CD8-positive, alpha-beta T cell (primary cell): ENCODE measurements at regions of chr1 and their contacts with region 1.

Region 1: GRCh38 chr1:8848663-8849386 is 29.7 kb downstream of the ENO1 start:
- DNase-seq: peak; percentile 51 to 86 (median 76)
- ATAC-seq: peak; percentile 92
- H3K4me3 ChIP-seq: no peak overlapping the region
- H3K4me3 Mint-ChIP-seq: no peak overlapping the region
- H3K27ac ChIP-seq: no peak overlapping the region
- H3K27ac Mint-ChIP-seq: no peak overlapping the region
- H3K4me1 ChIP-seq: peaks cover 3% of the 10 kb centered on the region
- H3K4me1 Mint-ChIP-seq: peaks cover 2% of the 10 kb centered on the region
- H3K27me3 ChIP-seq: no peaks in the 10 kb centered on the region
- H3K27me3 Mint-ChIP-seq: peaks cover 2% of the 10 kb centered on the region
- CTCF ChIP-seq: peak; percentile 82

Region 2: GRCh38 chr1:7993593-7994479 is 855.0 kb before region 1 on chr1:
- CTCF ChIA-PET with region 1: no interaction called
- POLR2A ChIA-PET with region 1: no interaction called
- intact Hi-C with region 1: loop called in 1 of 2 experiments (anchors 10 kb)
- DNase-seq: no peak
- ATAC-seq: no peak
- H3K4me3 ChIP-seq: no peak overlapping the region
- H3K4me3 Mint-ChIP-seq: no peak overlapping the region
- H3K27ac ChIP-seq: no peak overlapping the region
- H3K27ac Mint-ChIP-seq: no peak overlapping the region
- H3K4me1 ChIP-seq: no peaks in the 10 kb centered on the region
- H3K4me1 Mint-ChIP-seq: no peaks in the 10 kb centered on the region
- H3K27me3 ChIP-seq: no peaks in the 10 kb centered on the region
- H3K27me3 Mint-ChIP-seq: no peaks in the 10 kb centered on the region
- CTCF ChIP-seq: no peak

Region 3: GRCh38 chr1:8554956-8555534 is 293.8 kb before region 1 on chr1:
- CTCF ChIA-PET with region 1: interaction called, 21 read pairs
- POLR2A ChIA-PET with region 1: interaction called, 3 read pairs
- intact Hi-C with region 1: no loop called
- DNase-seq: no peak
- ATAC-seq: no peak
- H3K4me3 ChIP-seq: no peak overlapping the region
- H3K4me3 Mint-ChIP-seq: no peak overlapping the region
- H3K27ac ChIP-seq: no peak overlapping the region
- H3K27ac Mint-ChIP-seq: no peak overlapping the region
- H3K4me1 ChIP-seq: peaks cover 16% of the 10 kb centered on the region
- H3K4me1 Mint-ChIP-seq: peaks cover 22% of the 10 kb centered on the region
- H3K27me3 ChIP-seq: no peaks in the 10 kb centered on the region
- H3K27me3 Mint-ChIP-seq: no peaks in the 10 kb centered on the region
- CTCF ChIP-seq: no peak

Region 4: GRCh38 chr1:8571200-8571984 is 277.4 kb before region 1 on chr1:
- CTCF ChIA-PET with region 1: interaction called, 114 read pairs
- POLR2A ChIA-PET with region 1: no interaction called
- intact Hi-C with region 1: no loop called
- DNase-seq: no peak
- ATAC-seq: no peak
- H3K4me3 ChIP-seq: no peak overlapping the region
- H3K4me3 Mint-ChIP-seq: no peak overlapping the region
- H3K27ac ChIP-seq: no peak overlapping the region
- H3K27ac Mint-ChIP-seq: no peak overlapping the region
- H3K4me1 ChIP-seq: no peaks in the 10 kb centered on the region
- H3K4me1 Mint-ChIP-seq: peaks cover 7% of the 10 kb centered on the region
- H3K27me3 ChIP-seq: no peaks in the 10 kb centered on the region
- H3K27me3 Mint-ChIP-seq: no peaks in the 10 kb centered on the region
- CTCF ChIP-seq: no peak

Region 5: DNA sequence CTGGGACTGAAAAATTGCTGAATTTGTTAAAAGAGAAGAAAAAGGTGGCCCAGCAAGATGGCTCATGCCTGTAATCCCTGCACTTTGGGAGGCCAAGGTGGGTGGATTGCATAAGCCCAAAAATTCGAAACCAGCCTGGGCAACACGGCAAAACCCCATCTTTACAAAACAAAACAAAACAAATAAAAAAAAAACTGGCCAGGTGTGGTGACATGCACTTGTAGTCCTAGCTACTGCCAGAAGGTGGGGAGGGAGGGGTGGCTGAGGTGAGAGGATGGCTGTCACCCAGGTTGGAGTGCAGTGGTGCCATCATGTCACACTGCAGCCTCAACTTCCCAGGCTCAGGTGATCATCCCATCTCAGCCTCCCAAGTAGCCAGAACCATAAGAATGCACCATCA is 54.3 kb before region 1 on chr1:
- CTCF ChIA-PET with region 1: interaction called, 5 read pairs
- POLR2A ChIA-PET with region 1: no interaction called
- intact Hi-C with region 1: loop called in 1 of 2 experiments (anchors 1 kb)
- DNase-seq: peak in 3 of 9 experiments; percentile 18 to 28 (median 24)
- ATAC-seq: no peak
- H3K4me3 ChIP-seq: no peak overlapping the region
- H3K4me3 Mint-ChIP-seq: no peak overlapping the region
- H3K27ac ChIP-seq: no peak overlapping the region
- H3K27ac Mint-ChIP-seq: no peak overlapping the region
- H3K4me1 ChIP-seq: no peaks in the 10 kb centered on the region
- H3K4me1 Mint-ChIP-seq: peaks cover 9% of the 10 kb centered on the region
- H3K27me3 ChIP-seq: no peaks in the 10 kb centered on the region
- H3K27me3 Mint-ChIP-seq: no peaks in the 10 kb centered on the region
- CTCF ChIP-seq: no peak

Region 6: GRCh38 chr1:8831340-8831739 is 17.5 kb before region 1 on chr1:
- CTCF ChIA-PET with region 1: interaction called, 10 read pairs
- POLR2A ChIA-PET with region 1: no interaction called
- intact Hi-C with region 1: no loop called
- DNase-seq: no peak
- ATAC-seq: no peak
- H3K4me3 ChIP-seq: no peak overlapping the region
- H3K4me3 Mint-ChIP-seq: no peak overlapping the region
- H3K27ac ChIP-seq: no peak overlapping the region
- H3K27ac Mint-ChIP-seq: no peak overlapping the region
- H3K4me1 ChIP-seq: peaks cover 7% of the 10 kb centered on the region
- H3K4me1 Mint-ChIP-seq: peaks cover 14% of the 10 kb centered on the region
- H3K27me3 ChIP-seq: no peaks in the 10 kb centered on the region
- H3K27me3 Mint-ChIP-seq: no peaks in the 10 kb centered on the region
- CTCF ChIP-seq: no peak

Region 7: DNA sequence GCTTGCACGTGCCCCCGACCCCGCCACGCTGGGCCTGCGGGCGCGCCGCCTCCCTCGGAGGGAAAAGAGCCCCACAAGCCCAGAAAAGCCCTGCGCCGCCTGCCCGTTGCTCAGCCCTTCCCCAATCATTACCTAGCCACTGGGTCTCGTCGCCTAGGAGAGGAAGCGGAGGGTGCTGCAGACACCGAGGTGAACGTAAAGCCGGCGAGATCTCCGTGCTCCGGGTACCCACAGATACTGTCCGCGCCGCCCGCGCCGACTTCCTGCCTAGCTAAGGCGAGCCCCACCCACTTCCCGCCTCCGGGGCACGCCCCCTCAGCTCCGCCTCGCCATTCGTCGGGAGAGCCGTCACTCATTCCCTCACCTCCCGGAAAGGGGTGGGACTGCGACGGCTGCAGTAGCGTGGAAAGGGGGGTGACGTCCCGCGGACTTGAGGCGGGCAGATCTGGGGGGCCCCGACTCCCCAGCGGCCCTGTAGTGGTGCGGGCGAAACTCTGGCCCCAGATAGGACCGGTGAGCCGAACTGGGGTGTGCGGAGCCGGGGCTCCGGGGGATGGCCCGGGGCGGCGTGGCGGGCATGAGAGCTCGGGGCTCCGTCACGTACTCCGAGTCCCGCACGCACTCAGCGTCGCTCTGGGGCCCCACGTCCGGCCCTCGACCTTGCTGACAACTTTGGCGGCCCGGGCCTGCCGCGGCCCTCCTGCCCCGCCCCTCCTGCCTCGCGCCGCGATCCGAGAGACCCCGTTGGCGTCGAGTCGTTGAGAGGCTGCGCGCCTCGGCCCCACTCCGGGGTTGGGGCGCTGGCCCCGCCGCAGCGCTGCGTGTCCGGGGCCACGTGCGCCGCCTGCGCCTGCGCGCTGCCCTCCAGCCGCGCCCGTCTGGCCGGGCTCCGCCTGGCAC is 29.9 kb after region 1 on chr1 and contains the start of gene ENO1:
- CTCF ChIA-PET with region 1: interaction called, 5 read pairs
- POLR2A ChIA-PET with region 1: interaction called, 10 read pairs
- intact Hi-C with region 1: no loop called
- DNase-seq: peak; percentile 96 to 100 (median 99)
- ATAC-seq: peak; percentile 80
- H3K4me3 ChIP-seq: peak within 1 kb of the TSS; percentile 90 to 94
- H3K4me3 Mint-ChIP-seq: peak within 1 kb of the TSS; percentile 92
- H3K27ac ChIP-seq: peak within 1 kb of the TSS; percentile 80 to 99
- H3K27ac Mint-ChIP-seq: peak within 1 kb of the TSS; percentile 98
- H3K4me1 ChIP-seq: peaks cover 43% of the 10 kb centered on the region
- H3K4me1 Mint-ChIP-seq: peaks cover 47% of the 10 kb centered on the region
- H3K27me3 ChIP-seq: no peaks in the 10 kb centered on the region
- H3K27me3 Mint-ChIP-seq: no peaks in the 10 kb centered on the region
- CTCF ChIP-seq: no peak
- total RNA-seq, gene ENO1: 130 to 136 TPM